ENCODE measurements at regions of chr5 and their contacts with region 1.

Region 1: GRCh38 chr5:112921833-112922817 is at the start of gene REEP5:
- DNase-seq: peak; percentile 83 to 87 (median 85)
- H3K4me3 ChIP-seq: peak within 1 kb of the TSS; percentile 53 to 78
- H3K4me3 Mint-ChIP-seq: peak within 1 kb of the TSS; percentile 91 to 98 (median 93)
- H3K27ac ChIP-seq: peak within 1 kb of the TSS; percentile 84
- H3K27ac Mint-ChIP-seq: peak within 1 kb of the TSS; percentile 86 to 97 (median 96)
- H3K4me1 ChIP-seq: peaks cover 69% of the 10 kb centered on the region
- H3K4me1 Mint-ChIP-seq: peaks cover 49 to 77% (median 57%) of the 10 kb centered on the region in 4 donors
- H3K27me3 ChIP-seq: no peaks in the 10 kb centered on the region
- H3K27me3 Mint-ChIP-seq: no peaks in the 10 kb centered on the region
- total RNA-seq, gene REEP5: 55.6 to 61.1 TPM

Region 2: GRCh38 chr5:112551419-112552032 is 370.6 kb before region 1 on chr5:
- CTCF ChIA-PET with region 1: interaction called, 4 read pairs
- POLR2A ChIA-PET with region 1: no interaction called
- intact Hi-C with region 1: loop called (anchors 1 kb)
- DNase-seq: peak; percentile 34 to 60 (median 57)
- H3K4me3 ChIP-seq: no peak overlapping the region
- H3K4me3 Mint-ChIP-seq: no peak overlapping the region
- H3K27ac ChIP-seq: no peak overlapping the region
- H3K27ac Mint-ChIP-seq: no peak overlapping the region
- H3K4me1 ChIP-seq: no peaks in the 10 kb centered on the region
- H3K4me1 Mint-ChIP-seq: peaks cover 0 to 2% (median 0%) of the 10 kb centered on the region in 4 donors
- H3K27me3 ChIP-seq: no peaks in the 10 kb centered on the region
- H3K27me3 Mint-ChIP-seq: no peaks in the 10 kb centered on the region

Region 3: GRCh38 chr5:112848116-112848811 is 73.9 kb before region 1 on chr5:
- CTCF ChIA-PET with region 1: interaction called, 9 read pairs
- POLR2A ChIA-PET with region 1: interaction called, 8 read pairs
- intact Hi-C with region 1: loop called (anchors 1 kb)
- DNase-seq: peak in 4 of 5 donors; percentile 37 to 43 (median 40)
- H3K4me3 ChIP-seq: no peak overlapping the region
- H3K4me3 Mint-ChIP-seq: peak overlapping the region in 2 of 8 donors; percentile 15 to 55
- H3K27ac ChIP-seq: no peak overlapping the region
- H3K27ac Mint-ChIP-seq: peak overlapping the region in 1 of 7 donors; percentile 10
- H3K4me1 ChIP-seq: peaks cover 3% of the 10 kb centered on the region
- H3K4me1 Mint-ChIP-seq: peaks cover 4 to 5% (median 4%) of the 10 kb centered on the region in 4 donors
- H3K27me3 ChIP-seq: no peaks in the 10 kb centered on the region
- H3K27me3 Mint-ChIP-seq: peaks cover 2 to 3% of the 10 kb centered on the region in 2 donors

Region 4: GRCh38 chr5:112885001-112885400 is 37.1 kb before region 1 on chr5:
- CTCF ChIA-PET with region 1: interaction called, 8 read pairs
- POLR2A ChIA-PET with region 1: interaction called, 12 read pairs
- intact Hi-C with region 1: loop called (anchors 2 kb)
- DNase-seq: no peak
- H3K4me3 ChIP-seq: no peak overlapping the region
- H3K4me3 Mint-ChIP-seq: no peak overlapping the region
- H3K27ac ChIP-seq: no peak overlapping the region
- H3K27ac Mint-ChIP-seq: peak overlapping the region in 5 of 7 donors; percentile 44 to 76 (median 65)
- H3K4me1 ChIP-seq: peaks cover 44% of the 10 kb centered on the region
- H3K4me1 Mint-ChIP-seq: peaks cover 31 to 52% (median 37%) of the 10 kb centered on the region in 4 donors
- H3K27me3 ChIP-seq: no peaks in the 10 kb centered on the region
- H3K27me3 Mint-ChIP-seq: no peaks in the 10 kb centered on the region

Region 5: DNA sequence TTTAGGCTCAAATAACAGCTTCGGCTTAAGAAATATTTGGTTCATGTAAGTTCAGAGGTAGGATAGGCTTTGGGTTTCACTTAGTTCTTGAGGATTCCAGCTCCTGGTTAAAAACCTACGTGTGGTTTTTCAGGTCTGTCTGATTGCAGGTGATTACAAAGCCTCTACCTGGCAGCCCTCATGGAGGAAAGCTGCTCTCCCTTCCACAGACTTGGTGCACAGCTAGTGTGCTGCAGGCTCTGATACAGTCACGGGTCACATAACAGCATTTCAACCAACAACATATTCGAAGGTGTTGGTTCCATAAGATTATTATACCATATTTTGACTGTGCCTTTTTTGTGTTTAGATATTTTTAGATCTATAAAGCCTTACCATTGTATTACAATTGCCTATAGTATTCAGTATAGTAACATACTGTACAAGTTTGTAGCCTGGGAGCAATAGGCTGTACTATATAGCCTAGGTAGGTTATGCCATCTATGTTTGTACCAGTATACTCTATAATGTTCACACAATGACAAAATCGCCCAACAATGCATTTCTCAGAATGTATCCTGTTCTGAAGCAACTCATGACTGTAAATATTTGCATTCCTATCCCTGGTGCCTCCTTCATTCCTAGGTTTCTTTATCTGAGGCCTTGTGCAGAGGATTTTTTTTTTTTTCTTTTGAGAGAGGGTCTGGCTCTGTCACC is 46.4 kb after region 1 on chr5:
- CTCF ChIA-PET with region 1: interaction called, 76 read pairs
- POLR2A ChIA-PET with region 1: interaction called, 8 read pairs
- intact Hi-C with region 1: loop called (anchors 1 kb)
- DNase-seq: no peak
- H3K4me3 ChIP-seq: no peak overlapping the region
- H3K4me3 Mint-ChIP-seq: no peak overlapping the region
- H3K27ac ChIP-seq: no peak overlapping the region
- H3K27ac Mint-ChIP-seq: no peak overlapping the region
- H3K4me1 ChIP-seq: peaks cover 8% of the 10 kb centered on the region
- H3K4me1 Mint-ChIP-seq: peaks cover 7 to 12% (median 8%) of the 10 kb centered on the region in 4 donors
- H3K27me3 ChIP-seq: no peaks in the 10 kb centered on the region
- H3K27me3 Mint-ChIP-seq: no peaks in the 10 kb centered on the region

Region 6: GRCh38 chr5:113513384-113514288 is 591.5 kb after region 1 on chr5 and contains the start of gene YTHDC2:
- CTCF ChIA-PET with region 1: no interaction called
- POLR2A ChIA-PET with region 1: interaction called, 3 read pairs
- intact Hi-C with region 1: loop called (anchors 5 kb)
- DNase-seq: peak; percentile 86 to 89 (median 87)
- H3K4me3 ChIP-seq: peak within 1 kb of the TSS; percentile 53 to 68
- H3K4me3 Mint-ChIP-seq: peak within 1 kb of the TSS; percentile 93 to 97 (median 96)
- H3K27ac ChIP-seq: peak within 1 kb of the TSS; percentile 84
- H3K27ac Mint-ChIP-seq: peak within 1 kb of the TSS; percentile 88 to 98 (median 97)
- H3K4me1 ChIP-seq: peaks cover 32% of the 10 kb centered on the region
- H3K4me1 Mint-ChIP-seq: peaks cover 25 to 44% (median 34%) of the 10 kb centered on the region in 4 donors
- H3K27me3 ChIP-seq: no peaks in the 10 kb centered on the region
- H3K27me3 Mint-ChIP-seq: peaks cover 4 to 7% of the 10 kb centered on the region in 2 donors
- total RNA-seq, gene YTHDC2: 42.8 to 46.4 TPM

Measured in CD4-positive, alpha-beta memory T cell (primary cell).